PC-9 (cell line): ENCODE measurements at regions of chr15 and their contacts with region 1.

Region 1: GRCh38 chr15:90174140-90174875 is 26.8 kb upstream of the SEMA4B start:
- DNase-seq: no peak
- H3K4me3 ChIP-seq: no peak overlapping the region
- H3K27ac ChIP-seq: no peak overlapping the region
- H3K4me1 ChIP-seq: no peaks in the 10 kb centered on the region
- H3K27me3 ChIP-seq: no peaks in the 10 kb centered on the region
- CTCF ChIP-seq: no peak

Region 2: GRCh38 chr15:89307046-89307587 is 867.2 kb before region 1 on chr15:
- CTCF ChIA-PET with region 1: interaction called, 12 read pairs
- POLR2A ChIA-PET with region 1: no interaction called
- intact Hi-C with region 1: no loop called
- DNase-seq: no peak
- H3K4me3 ChIP-seq: no peak overlapping the region
- H3K27ac ChIP-seq: peak overlapping the region; percentile 18; the same call in 1 of the 2 replicates
- H3K4me1 ChIP-seq: no peaks in the 10 kb centered on the region
- H3K27me3 ChIP-seq: no peaks in the 10 kb centered on the region
- CTCF ChIP-seq: no peak